MCF 10A (cell line): ENCODE measurements at regions of chr2 and their contacts with region 1.

Region 1: GRCh38 chr2:41869542-41870264 is 178.1 kb upstream of the PKDCC start:
- DNase-seq: peak; percentile 66
- H3K4me3 Mint-ChIP-seq: no peak overlapping the region
- H3K27ac Mint-ChIP-seq: no peak overlapping the region
- H3K4me1 Mint-ChIP-seq: no peaks in the 10 kb centered on the region
- H3K27me3 Mint-ChIP-seq: no peaks in the 10 kb centered on the region
- CTCF ChIP-seq: peak; percentile 93

Region 2: GRCh38 chr2:41840702-41841551 is 28.8 kb before region 1 on chr2:
- CTCF ChIA-PET with region 1: interaction called, 15 read pairs
- POLR2A ChIA-PET with region 1: no interaction called
- intact Hi-C with region 1: no loop called
- DNase-seq: peak; percentile 94
- H3K4me3 Mint-ChIP-seq: peak overlapping the region; percentile 89
- H3K27ac Mint-ChIP-seq: peak overlapping the region; percentile 76
- H3K4me1 Mint-ChIP-seq: peaks cover 10% of the 10 kb centered on the region
- H3K27me3 Mint-ChIP-seq: peaks cover 39% of the 10 kb centered on the region
- CTCF ChIP-seq: peak; percentile 96

Region 3: DNA sequence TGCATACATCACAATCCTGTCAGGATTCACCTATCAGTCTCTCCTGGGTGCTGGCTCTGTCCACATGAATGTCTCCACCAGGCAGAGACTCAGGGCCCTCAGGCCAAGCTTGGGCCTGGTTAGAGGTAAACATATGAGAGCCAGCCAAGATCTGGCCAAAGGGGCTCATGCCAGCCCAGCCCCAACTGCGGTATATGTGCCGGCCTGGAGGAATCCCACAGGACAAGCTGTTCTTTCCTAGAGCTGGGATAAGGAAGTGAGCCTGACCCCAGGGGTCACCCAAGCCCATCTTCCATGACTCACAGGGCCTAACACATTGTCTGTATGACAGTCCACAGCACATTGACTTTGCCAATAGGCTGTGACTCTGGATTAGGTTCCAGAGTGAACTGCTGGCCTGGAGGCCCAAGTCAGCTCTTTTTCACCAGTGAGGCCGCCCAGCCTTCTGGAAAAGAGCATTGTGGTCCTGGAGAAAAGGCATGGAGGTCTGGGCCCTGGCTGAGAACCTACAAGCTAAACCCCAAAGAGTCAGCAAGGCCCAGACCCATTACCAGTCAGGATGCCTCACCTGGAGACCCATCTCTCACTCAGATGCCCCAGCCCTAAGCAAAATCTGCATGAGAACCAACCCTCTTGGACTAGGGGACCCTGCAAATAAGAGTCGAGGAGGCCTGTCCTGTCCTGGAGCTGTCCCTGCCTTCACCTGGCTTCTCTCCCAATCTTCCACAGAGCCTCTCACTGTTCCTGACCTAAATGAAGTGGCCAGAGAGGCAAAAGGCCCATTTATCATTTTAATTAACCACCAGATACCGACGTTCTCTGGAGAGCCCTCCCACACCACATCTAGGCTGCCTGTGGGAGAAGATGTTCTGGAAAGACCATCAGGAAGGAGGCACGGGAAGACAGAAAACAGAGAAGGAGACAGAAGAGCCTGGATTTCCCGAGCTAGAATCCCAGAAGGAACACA is 57.2 kb after region 1 on chr2:
- CTCF ChIA-PET with region 1: interaction called, 10 read pairs
- POLR2A ChIA-PET with region 1: no interaction called
- intact Hi-C with region 1: no loop called
- DNase-seq: peak; percentile 75
- H3K4me3 Mint-ChIP-seq: no peak overlapping the region
- H3K27ac Mint-ChIP-seq: no peak overlapping the region
- H3K4me1 Mint-ChIP-seq: peaks cover 22% of the 10 kb centered on the region
- H3K27me3 Mint-ChIP-seq: no peaks in the 10 kb centered on the region
- CTCF ChIP-seq: no peak

Region 4: GRCh38 chr2:42238644-42239288 is 369.1 kb after region 1 on chr2:
- CTCF ChIA-PET with region 1: interaction called, 38 read pairs
- POLR2A ChIA-PET with region 1: no interaction called
- intact Hi-C with region 1: loop called (anchors 5 kb)
- DNase-seq: peak; percentile 65
- H3K4me3 Mint-ChIP-seq: no peak overlapping the region
- H3K27ac Mint-ChIP-seq: no peak overlapping the region
- H3K4me1 Mint-ChIP-seq: no peaks in the 10 kb centered on the region
- H3K27me3 Mint-ChIP-seq: no peaks in the 10 kb centered on the region
- CTCF ChIP-seq: peak; percentile 64

Region 5: DNA sequence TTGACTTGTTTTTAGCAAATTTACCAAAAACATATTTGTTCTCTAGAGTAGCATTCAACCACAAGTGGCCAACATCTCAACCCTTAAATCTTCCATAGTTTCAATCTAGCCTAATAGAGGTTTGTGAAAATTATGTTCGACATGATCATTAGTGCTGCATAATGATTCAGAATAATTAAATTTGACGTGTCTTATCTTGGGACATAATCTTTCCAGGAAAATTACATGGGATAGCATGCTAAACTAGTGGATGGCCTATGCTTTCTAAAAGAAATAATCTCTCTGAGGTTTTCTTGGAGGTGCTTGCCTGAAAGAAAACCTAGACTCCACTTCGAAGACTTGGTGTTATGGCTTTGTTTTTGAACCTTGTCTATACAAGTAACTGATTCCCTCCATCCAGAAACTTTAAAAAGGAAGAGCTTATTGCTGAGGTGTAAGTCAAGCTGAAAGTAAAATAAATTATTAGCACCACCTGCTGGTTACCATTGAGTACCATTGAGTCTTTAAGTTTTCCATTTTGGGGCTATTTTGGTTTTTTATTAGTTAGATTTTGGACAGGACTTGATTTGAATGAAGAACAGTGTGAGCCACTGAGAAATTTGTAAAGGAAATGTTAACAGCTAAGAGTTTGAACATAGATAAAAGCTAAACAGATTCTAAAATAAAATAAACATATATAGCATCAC is 458.6 kb after region 1 on chr2:
- CTCF ChIA-PET with region 1: interaction called, 8 read pairs
- POLR2A ChIA-PET with region 1: no interaction called
- intact Hi-C with region 1: loop called (anchors 10 kb)
- DNase-seq: peak; percentile 36
- H3K4me3 Mint-ChIP-seq: no peak overlapping the region
- H3K27ac Mint-ChIP-seq: no peak overlapping the region
- H3K4me1 Mint-ChIP-seq: peaks cover 10% of the 10 kb centered on the region
- H3K27me3 Mint-ChIP-seq: no peaks in the 10 kb centered on the region
- CTCF ChIP-seq: peak; percentile 37